ENCODE measurements at regions of chr17 and their contacts with region 1.

Region 1: DNA sequence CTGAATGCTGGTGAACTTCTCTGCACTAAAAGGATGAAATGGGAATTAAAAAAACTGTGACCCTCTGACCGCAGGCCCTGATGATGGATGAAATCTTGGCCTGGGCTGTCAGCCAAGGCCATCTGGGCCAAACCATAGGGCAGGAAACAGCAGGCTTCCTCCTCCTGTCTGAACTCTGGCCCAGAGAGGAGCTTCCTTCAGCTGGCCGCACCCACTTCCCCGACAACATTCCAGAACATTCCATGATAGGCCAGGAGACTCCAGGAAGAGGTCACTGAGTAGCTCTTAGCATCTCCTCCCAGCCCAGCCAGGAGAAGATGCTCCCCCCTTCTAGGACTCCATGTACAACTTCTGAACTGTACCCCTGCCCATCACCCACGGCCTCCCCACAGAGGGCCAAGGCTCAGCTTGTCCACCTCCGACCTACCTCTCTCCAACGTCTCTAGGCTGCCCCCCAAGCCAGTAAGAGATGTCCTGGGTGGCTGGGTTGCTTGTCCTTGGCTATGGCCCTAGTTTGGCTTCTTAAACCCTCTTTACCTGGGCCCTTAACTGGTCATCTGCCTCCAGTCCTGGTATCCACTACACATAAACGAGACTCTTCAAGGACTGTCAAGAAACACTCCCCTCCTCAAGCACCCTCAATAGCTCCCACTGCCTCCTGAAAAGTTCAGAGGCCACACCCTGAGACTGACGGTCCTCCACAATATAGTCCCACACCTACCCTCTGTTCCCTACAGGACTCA is 1.7 kb downstream of the RPH3AL start:
- DNase-seq: peak; percentile 94
- H3K4me3 ChIP-seq: no peak overlapping the region
- H3K27ac ChIP-seq: peak overlapping the region; percentile 83
- H3K4me1 ChIP-seq: peaks cover 16% of the 10 kb centered on the region
- H3K27me3 ChIP-seq: no peaks in the 10 kb centered on the region
- CTCF ChIP-seq: no peak

Region 2: GRCh38 chr17:247767-248166 is 103.1 kb before region 1 on chr17:
- intact Hi-C with region 1: loop called (anchors 10 kb)
- DNase-seq: no peak
- H3K4me3 ChIP-seq: no peak overlapping the region
- H3K27ac ChIP-seq: no peak overlapping the region
- H3K4me1 ChIP-seq: peaks cover 3% of the 10 kb centered on the region
- H3K27me3 ChIP-seq: no peaks in the 10 kb centered on the region
- CTCF ChIP-seq: no peak

Measured in colonic mucosa (tissue), 4 donors.